Activated CD4-positive, alpha-beta T cell treated with anti-CD3 and anti-CD28 coated beads, Interleukin-2, amount 10 ng/mL, durations not matched to agents 24 days and 14 days (primary cell): ENCODE measurements at regions of chr19 and their contacts with region 1.

Region 1: GRCh38 chr19:35693830-35694599 is 10.3 kb upstream of the ZBTB32 start:
- DNase-seq: peak; percentile 97
- H3K4me3 Mint-ChIP-seq: no peak overlapping the region
- H3K27ac Mint-ChIP-seq: peak overlapping the region; percentile 35
- H3K4me1 Mint-ChIP-seq: peaks cover 14% of the 10 kb centered on the region
- H3K27me3 Mint-ChIP-seq: no peaks in the 10 kb centered on the region

Region 2: DNA sequence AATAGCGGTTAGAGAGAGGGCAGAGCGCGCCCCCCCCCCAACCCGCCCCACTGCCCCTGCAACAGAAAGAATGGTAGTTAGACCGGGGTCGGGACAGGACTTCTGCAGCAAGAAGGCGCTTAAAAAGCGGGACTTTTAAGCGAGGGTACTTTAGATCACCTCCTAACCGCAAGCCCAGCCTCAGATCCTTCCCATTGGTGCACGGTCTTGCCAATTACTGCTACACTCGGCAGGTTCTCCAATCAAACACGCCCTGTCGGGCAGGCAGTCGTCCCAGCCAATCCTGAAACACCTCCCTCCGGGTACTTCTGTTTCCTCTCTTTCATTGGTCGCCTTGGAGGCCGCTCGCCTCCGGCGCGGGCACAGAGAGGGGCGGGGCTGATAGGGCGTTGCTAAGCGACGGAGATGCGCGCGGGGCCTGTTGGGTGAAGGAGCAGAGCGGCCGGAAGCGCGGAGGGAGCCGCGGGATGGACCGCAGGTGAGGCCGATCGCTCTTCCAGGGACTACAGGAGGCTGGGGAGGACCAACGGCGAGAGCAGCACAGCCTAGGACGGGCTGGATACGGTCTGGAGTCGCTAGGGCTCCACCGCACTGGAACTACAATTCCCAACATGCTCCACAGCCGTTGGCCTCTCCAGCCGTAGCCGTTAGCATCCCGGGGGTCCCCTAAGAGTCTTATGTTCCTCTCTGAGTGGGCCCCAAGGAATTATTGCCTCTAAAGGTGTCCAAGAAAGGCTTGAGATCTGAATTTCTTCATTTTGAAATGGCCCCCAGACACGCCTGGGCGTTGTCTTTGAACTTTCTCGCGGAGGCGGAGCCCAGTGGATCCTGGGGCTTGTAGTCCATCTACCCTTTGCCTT is 64.0 kb after region 1 on chr19 and contains the start of gene PROSER3:
- intact Hi-C with region 1: loop called (anchors 5 kb)
- DNase-seq: peak; percentile 100
- H3K4me3 Mint-ChIP-seq: peak within 1 kb of the TSS; percentile 95
- H3K27ac Mint-ChIP-seq: peak within 1 kb of the TSS; percentile 98
- H3K4me1 Mint-ChIP-seq: peaks cover 25% of the 10 kb centered on the region
- H3K27me3 Mint-ChIP-seq: peaks cover 2% of the 10 kb centered on the region
- total RNA-seq, gene PROSER3: 35.2 and 43.6 TPM in 2 replicates

Region 3: GRCh38 chr19:35822579-35822978 is 128.6 kb after region 1 on chr19:
- intact Hi-C with region 1: loop called (anchors 5 kb)
- DNase-seq: no peak
- H3K4me3 Mint-ChIP-seq: no peak overlapping the region
- H3K27ac Mint-ChIP-seq: no peak overlapping the region
- H3K4me1 Mint-ChIP-seq: peaks cover 3% of the 10 kb centered on the region
- H3K27me3 Mint-ChIP-seq: peaks cover 8% of the 10 kb centered on the region

Region 4: DNA sequence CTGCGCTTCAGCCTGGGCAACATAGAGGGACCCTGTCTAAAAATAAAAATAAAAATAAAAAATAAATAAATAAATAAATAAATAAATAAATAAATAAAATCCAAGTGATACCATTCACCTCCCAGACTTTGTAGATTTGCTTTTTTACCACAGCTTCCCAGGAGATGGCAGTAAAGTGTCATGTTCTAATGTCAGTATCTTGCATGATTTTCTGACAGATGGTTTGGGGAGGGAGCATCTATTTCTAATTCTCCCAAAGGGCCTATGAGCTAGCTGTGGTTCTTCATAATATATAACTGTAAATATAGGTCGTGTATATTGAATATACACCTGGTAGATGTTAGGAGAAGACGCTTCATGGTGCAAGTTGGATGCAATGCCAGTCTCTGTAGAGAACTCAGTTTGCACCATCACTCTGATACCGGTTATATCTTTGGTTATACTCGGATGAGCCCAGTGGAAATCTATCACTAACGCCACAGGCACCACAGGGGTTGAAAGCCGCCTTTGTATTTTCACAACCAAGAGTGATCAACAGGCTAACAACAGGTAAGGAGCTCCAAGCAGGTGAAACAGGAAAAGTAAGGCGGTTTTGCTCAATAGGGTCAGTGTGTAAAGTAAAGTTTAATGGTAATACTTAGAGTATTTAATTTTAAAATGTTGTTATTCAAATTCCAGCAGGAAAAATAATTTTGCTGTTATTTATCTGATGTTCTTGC is 188.3 kb after region 1 on chr19:
- intact Hi-C with region 1: loop called (anchors 1 kb)
- DNase-seq: peak; percentile 87
- H3K4me3 Mint-ChIP-seq: no peak overlapping the region
- H3K27ac Mint-ChIP-seq: no peak overlapping the region
- H3K4me1 Mint-ChIP-seq: peaks cover 10% of the 10 kb centered on the region
- H3K27me3 Mint-ChIP-seq: peaks cover 8% of the 10 kb centered on the region